ENCODE measurements at regions of chr19 and their contacts with region 1.

Region 1: DNA sequence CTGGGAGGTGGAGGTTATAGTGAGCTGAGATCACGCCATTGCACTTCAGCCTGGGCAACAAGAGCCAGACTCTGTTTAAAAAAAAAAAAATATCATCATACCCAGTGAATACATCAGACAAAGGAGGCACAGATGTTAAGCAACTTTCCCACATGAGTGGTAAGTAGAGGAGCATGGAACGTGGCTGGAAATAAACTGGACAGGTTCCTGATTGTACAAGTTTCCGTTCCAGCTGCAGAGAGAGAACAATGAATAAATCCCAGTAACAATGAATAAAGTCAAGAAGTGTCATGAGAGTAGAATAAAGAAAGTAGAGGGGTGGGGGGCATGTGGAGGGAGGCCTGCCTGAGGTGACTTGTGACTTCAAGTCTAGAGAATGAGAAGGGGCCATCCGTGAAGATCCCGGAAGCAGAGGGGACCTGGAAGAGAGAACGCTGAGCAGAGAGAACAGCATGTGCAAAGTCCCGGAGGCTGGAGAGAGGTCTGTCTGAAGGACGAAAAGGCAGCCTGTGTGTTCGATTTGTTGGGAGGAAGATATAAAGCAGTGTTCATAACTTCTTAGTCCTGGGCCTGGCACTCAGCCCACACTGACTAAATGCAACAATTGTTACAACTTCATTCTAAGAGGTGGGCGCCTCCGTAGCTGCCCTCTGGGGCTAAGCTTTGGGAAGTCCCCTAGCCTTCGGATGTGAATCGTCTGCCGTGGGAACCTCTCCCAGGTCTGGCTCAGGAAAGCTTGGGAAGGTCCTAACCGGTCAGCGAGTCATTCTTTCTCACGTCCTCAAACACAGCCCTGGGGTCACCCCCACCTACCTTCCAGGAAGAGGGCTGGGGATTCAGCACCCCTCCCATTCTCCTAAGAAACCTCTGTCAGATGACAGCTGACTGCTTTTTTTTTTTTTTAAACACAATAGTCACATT is 15.3 kb upstream of the ARHGEF18 start:
- DNase-seq: no peak
- H3K27ac ChIP-seq: no peak overlapping the region
- CTCF ChIP-seq: no peak

Region 2: GRCh38 chr19:7191946-7192691 is 141.3 kb before region 1 on chr19:
- CTCF ChIA-PET with region 1: no interaction called
- POLR2A ChIA-PET with region 1: no interaction called
- DNase-seq: no peak
- H3K27ac ChIP-seq: no peak overlapping the region
- CTCF ChIP-seq: no peak

Region 3: DNA sequence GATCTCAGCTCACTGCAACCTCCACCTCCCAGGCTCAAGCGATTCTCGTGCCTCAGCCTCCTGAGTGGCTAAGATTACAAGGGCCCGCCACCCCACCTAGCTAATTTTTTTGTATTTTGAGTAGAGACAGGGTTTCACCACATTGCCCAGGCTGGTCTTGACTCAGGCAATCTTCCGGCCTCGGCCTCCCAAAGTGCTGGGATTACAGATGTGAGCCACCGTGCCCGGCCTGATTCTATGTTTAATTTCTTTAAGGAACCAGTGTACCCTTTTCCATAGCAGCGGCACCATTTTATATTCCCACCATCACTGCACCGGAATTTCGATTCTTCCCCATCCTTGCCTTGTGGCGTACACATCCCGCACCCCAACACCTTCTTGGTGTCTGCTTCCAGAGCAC is 21.5 kb before region 1 on chr19:
- CTCF ChIA-PET with region 1: no interaction called
- POLR2A ChIA-PET with region 1: interaction called, 11 read pairs
- DNase-seq: no peak
- H3K27ac ChIP-seq: no peak overlapping the region
- CTCF ChIP-seq: no peak

Measured in RWPE1 (cell line).